AG04449 (cell line): ENCODE measurements at regions of chr13 and their contacts with region 1.

Region 1: DNA sequence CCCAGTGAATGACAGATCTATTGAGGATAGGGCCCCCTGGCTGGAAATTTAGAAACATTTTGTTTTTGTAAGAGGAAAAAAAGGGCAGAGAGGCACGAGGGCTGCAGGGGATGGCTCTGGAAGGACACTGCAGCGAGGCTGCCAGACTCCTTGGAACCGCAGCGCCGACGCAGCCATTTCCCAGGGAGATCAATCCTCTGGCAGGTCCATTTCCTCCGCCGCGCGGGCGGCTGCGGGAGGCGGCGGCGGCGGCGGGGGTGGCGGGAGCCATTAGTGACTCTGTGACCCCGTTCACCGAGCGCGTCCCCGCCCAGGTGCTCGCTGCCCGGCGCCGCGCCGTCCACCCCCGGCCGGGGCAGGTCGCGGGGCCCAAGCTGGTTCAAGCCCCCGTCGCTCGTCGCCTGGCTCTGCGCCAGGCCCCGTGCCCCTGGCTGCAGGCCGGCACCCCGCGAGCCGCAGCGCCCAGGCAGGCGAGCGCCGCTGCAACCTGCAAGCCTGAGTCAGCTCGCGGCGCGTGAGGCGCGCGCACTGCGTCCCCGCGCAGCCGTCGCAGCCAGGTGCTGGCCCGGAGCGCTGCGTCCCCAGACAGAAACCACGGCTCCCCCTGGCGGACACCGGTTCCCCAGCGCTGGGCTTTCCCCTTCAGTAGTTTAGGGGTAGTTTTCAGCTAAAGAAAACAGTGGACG is 192.6 kb downstream of the KATNAL1 start:
- DNase-seq: no peak
- H3K4me3 ChIP-seq: peak overlapping the region; percentile 60
- CTCF ChIP-seq: peak; percentile 95

Region 2: GRCh38 chr13:29743201-29743786 is 371.4 kb before region 1 on chr13:
- CTCF ChIA-PET with region 1: no interaction called
- POLR2A ChIA-PET with region 1: no interaction called
- DNase-seq: peak; percentile 56
- H3K4me3 ChIP-seq: no peak overlapping the region; the same call in 1 of the 2 replicates
- CTCF ChIP-seq: no peak

Region 3: DNA sequence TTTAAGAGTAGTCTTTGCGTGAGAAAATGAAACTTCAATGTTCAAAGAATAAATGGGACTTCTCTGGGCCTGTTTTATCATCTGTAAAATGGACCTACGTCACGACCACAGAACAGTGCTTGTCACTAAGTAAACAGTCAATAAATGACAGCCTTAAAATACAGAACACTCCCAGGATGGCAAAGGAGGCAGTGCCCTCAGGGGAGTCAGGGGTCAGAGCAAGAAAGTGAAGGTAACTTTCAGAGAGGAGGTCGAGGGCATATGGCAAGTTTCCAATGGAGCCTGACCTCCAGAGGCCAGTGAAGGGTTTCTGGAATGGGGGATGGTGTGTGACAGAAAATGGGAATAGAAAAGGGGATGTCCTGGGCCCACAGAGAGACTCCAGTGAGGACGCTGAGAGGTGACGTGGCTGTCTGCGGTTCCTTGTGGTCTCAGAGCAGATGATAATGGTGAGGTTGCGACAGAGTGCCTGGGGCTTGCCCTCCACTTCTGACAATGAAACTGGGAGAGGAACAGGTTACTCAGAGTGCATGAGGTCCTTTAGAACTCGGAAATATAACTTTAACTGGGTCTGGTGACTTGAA is 356.1 kb before region 1 on chr13:
- CTCF ChIA-PET with region 1: interaction called, 21 read pairs
- POLR2A ChIA-PET with region 1: no interaction called
- DNase-seq: no peak
- H3K4me3 ChIP-seq: no peak overlapping the region
- CTCF ChIP-seq: no peak

Region 4: DNA sequence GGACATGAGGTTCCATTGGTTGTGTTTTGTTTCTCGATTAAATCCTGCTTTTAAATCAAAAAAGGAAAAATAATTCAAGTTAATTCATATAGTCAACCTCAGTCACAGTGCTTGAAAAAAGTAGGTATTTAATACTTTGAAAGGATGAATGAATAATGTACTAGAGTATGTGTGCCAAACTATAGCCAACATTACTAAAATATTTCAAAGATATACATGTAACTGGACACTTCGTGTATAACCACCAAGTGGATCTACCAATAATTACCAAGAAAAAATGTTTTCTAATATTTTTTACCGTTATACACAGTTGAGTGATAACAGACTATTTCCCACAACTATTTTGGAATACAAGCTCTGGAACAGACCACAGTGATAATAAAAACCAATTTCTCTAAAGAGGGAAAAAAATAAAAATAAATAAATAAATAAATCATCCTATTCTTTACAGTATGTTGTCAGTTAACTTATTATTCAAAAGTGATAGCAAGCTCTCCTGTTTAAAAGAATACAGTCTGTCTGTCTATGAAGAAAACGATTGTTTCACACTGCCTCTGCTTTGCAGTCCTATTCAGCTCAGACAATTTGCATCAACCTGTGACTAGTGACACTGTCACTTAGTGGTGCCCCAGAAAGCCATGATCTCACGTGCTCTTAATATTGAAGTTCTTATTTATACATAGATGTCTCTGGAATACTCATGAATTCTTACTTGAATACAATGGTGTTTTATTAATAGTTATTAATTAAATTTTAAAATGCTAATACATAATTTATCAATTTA is 322.5 kb before region 1 on chr13:
- CTCF ChIA-PET with region 1: interaction called, 12 read pairs
- POLR2A ChIA-PET with region 1: no interaction called
- DNase-seq: no peak
- H3K4me3 ChIP-seq: no peak overlapping the region
- CTCF ChIP-seq: no peak

Region 5: GRCh38 chr13:29830000-29830399 is 284.7 kb before region 1 on chr13:
- CTCF ChIA-PET with region 1: interaction called, 360 read pairs
- POLR2A ChIA-PET with region 1: no interaction called
- DNase-seq: no peak
- H3K4me3 ChIP-seq: no peak overlapping the region
- CTCF ChIP-seq: no peak

Region 6: DNA sequence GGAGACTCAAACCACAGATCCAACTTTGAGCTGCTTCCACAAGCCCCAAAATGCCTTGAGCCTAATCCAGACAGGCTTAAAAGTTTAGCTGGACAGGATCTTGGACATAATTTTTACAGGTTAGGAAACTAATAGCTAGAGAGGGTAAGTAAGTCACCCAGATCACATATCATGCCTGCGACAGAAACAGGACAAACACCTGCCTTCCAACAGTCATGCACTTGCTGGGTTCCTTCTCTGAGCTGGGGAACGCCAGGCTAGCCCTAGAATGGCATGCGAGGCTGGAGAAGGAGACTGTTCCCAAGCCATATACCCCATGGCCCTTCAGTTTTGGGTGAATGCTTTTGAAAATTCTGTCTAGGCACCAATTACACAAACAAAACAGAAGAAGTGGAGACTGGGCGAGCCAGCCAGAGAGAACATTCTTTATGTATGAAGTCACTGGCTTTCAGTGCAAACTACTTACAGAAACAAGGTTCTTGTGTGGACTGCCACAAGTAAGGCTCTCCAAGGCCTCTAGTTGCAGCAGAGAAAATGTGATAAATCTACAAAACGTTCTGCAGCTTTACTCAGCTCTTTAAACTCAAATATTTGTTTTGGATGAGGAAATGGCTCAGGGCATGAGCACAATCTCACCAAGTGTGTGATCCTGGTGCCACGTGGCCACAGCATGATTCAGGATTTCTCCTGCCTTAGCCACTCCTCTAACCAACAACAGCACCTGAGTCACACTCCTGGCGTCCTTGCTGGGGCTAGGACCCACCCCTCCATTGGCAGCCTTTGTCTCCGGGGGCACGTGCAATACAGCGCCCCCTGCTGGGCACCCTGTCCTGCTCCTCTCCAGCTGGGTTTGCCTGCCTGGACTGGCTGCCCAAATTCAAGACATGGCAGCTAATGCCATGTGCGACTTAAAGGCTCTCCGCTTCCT is 190.9 kb before region 1 on chr13:
- CTCF ChIA-PET with region 1: interaction called, 128 read pairs
- POLR2A ChIA-PET with region 1: interaction called, 3 read pairs
- DNase-seq: peak; percentile 97
- H3K4me3 ChIP-seq: peak overlapping the region; percentile 16; the same call in 1 of the 2 replicates
- CTCF ChIP-seq: peak; percentile 89

Region 7: DNA sequence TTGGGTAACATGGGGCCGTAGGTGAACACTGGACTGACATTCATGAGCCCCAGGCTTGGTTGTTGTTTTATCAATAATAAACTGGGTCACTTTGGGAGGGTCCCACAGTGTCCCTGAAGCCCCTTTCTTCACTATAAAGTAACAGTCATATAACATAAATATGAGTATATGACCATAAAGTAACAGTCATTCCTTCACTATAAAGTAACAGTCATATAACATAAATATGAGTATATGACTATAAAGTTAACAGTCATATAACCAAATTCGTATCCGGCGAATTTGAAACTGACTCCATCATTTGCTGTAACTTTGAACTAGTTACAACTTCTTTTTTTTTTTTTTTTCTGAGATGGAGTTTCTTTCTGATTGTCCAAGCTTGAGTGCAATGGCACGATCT is 17.6 kb before region 1 on chr13:
- CTCF ChIA-PET with region 1: interaction called, 41 read pairs
- POLR2A ChIA-PET with region 1: no interaction called
- DNase-seq: no peak
- H3K4me3 ChIP-seq: no peak overlapping the region
- CTCF ChIP-seq: no peak

Region 8: GRCh38 chr13:30158774-30159445 is 44.2 kb after region 1 on chr13:
- CTCF ChIA-PET with region 1: interaction called, 33 read pairs
- POLR2A ChIA-PET with region 1: no interaction called
- DNase-seq: peak; percentile 45
- H3K4me3 ChIP-seq: no peak overlapping the region
- CTCF ChIP-seq: peak; percentile 61